ENCODE measurements at regions of chr18 and their contacts with region 1.

Region 1: DNA sequence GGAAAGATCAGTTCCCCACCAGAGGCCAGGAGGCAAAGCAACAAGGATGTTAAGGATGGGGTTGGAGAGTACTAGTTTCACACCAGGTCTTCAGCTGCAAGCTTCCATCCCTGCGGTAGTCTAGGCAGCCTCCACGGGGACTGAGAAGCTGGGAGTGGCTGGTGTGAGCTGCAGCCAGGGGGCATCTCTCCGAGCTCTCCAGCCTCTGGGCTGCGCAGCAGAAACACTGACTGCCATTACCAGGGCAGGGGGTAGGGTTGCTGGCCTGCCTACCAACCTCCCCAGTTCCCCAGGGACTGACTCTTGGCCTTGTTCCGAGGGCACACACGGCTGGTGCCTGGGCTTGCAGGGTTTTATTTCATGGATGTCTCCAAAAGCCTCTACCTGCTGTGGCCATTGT is 15.9 kb downstream of the GATA6 start:
- DNase-seq: no peak
- H3K4me3 ChIP-seq: no peak overlapping the region
- H3K27ac ChIP-seq: no peak overlapping the region
- H3K4me1 ChIP-seq: no peaks in the 10 kb centered on the region
- H3K27me3 ChIP-seq: no peaks in the 10 kb centered on the region
- CTCF ChIP-seq: no peak
- POLR2A ChIP-seq: no peak

Region 2: DNA sequence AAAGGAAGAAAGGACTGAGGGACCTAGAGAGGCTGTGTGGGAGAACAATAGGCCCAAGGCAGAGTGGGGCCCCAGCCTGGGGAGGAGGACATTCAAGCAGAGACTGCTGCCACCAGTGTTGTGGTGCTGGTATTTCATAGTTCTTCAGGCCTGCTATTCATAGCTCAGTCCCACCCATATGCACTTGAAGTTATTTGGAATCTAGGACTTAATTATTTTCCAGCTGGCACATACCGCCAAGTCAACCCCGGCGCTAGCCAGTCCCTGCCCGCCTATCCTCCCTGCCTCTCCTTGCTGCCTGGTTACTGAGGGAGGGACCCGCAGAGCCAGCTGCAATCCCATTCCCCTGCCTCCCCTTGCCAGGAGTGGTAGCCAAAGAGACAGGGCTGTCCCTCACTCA is 1091.2 kb after region 1 on chr18:
- intact Hi-C with region 1: loop called (anchors 10 kb)
- DNase-seq: no peak
- H3K4me3 ChIP-seq: no peak overlapping the region
- H3K27ac ChIP-seq: no peak overlapping the region
- H3K4me1 ChIP-seq: no peaks in the 10 kb centered on the region
- H3K27me3 ChIP-seq: no peaks in the 10 kb centered on the region
- CTCF ChIP-seq: no peak
- POLR2A ChIP-seq: no peak